SK-N-SH (cell line): ENCODE measurements at regions of chr4 and their contacts with region 1.

Region 1: DNA sequence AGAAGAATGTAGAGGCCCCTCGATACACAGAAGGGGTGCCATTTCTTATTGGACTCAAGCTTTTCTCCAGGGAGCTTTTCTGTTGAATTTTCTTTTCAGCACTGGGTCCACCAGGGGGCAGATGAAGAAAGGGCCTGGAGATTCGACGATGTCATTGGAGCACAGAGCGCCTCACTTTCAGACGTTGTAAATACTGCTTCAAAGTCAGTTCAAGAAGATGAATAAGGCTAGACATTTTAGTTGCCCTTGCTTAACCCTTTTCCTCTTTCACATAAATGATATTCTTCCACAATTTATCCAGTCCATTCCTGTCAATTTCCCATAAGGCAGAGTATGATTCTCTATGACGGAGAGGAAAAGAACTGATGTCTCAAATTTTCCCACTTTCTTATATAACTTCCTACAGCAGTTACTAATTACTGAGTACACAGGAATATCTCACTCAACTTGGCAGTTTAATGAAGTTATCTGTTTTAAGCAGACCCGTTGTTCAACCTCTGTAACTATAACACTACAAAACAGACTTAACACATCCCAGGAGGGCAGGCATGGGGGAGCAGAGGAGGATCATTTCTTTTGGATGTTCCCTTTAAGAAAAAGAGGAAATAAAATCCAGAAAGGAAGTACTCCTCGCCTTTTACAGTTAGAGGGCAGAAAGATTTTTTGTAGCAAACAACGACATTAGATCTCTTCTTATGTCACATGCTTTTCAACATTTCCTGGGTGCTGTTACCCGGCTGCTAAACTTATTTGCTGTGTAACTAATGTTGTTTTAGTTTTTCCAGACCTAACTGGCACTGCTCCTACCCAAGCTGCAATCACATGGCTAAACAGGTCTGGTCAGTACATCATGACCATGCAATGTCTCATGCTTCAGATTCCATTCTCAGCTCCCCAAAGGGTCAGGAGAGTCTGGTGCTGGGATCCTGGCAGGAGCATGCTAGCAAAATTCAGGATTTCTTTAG is 12.2 kb upstream of the CENPU start:
- DNase-seq: peak; percentile 84
- H3K4me3 ChIP-seq: no peak overlapping the region; a peak in 1 of 4 replicates
- H3K27ac ChIP-seq: peak overlapping the region; percentile 32 to 82; a peak in 3 of 4 replicates
- H3K4me1 ChIP-seq: peaks cover 4 to 14% of the 10 kb centered on the region in 2 experiments; a peak in 1 of 4 replicates
- H3K27me3 ChIP-seq: no peaks in the 10 kb centered on the region
- CTCF ChIP-seq: peak; percentile 86
- EP300 ChIP-seq: no peak
- RAD21 ChIP-seq: peak; percentile 96

Region 2: GRCh38 chr4:184695178-184695896 is 50.8 kb before region 1 on chr4:
- CTCF ChIA-PET with region 1: no interaction called
- POLR2A ChIA-PET with region 1: no interaction called
- DNase-seq: no peak
- H3K4me3 ChIP-seq: no peak overlapping the region
- H3K27ac ChIP-seq: peak overlapping the region; percentile 46 to 76; a peak in 3 of 4 replicates
- H3K4me1 ChIP-seq: peaks cover 0 to 5% of the 10 kb centered on the region in 2 experiments; a peak in 1 of 4 replicates
- H3K27me3 ChIP-seq: no peaks in the 10 kb centered on the region
- CTCF ChIP-seq: no peak
- EP300 ChIP-seq: peak in 1 of 2 experiments; percentile 51; a peak in 2 of 4 replicates
- RAD21 ChIP-seq: no peak

Region 3: DNA sequence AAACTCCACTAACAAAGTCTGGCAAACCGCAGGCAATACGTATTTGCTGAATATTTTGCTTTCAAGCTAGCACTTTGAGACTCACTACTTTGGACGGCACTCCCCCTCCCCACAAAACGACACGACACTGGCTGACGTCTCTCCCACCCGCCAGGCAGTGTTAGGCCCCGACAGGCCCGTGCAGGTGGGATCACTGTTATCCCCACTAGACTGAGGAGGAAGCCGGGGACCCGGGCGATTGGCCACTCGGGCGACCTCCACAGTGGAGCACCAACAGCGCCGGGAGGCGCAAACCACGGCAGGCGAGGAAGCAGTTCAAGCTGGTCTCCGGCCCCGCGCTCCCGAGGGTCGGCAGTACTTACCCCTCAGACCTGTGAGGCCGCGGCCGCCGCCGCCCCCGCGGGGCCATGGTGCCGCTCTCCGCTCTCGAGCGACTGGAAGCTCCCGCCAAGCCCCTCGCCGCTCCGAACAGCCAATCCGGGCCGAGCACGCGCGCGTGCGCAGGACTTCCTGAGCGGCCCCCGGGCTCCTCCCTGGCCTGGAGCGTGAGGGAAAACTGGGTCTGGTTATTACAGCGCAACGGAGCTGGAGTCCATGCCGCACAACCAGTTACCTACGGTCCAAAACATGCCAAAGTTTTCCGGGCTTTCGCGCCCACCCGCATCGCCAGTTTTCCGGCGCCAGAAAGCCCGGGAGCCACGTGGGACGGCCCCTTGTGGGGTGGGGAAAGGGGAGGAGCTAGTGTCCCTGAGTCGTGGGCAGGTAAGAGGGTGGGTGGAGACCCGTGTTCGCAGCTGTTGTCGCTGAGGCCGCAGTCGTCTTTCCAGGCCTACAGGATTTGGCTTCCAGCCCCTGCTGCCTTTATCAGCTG is 12.2 kb before region 1 on chr4 and contains the start of gene CENPU:
- CTCF ChIA-PET with region 1: interaction called, 17 read pairs
- POLR2A ChIA-PET with region 1: interaction called, 7 read pairs
- DNase-seq: peak; percentile 99
- H3K4me3 ChIP-seq: peak within 1 kb of the TSS; percentile 95 to 97
- H3K27ac ChIP-seq: peak within 1 kb of the TSS; percentile 53 to 85
- H3K4me1 ChIP-seq: peaks cover 11 to 18% of the 10 kb centered on the region in 2 experiments; a peak in 3 of 4 replicates
- H3K27me3 ChIP-seq: no peaks in the 10 kb centered on the region
- CTCF ChIP-seq: no peak
- EP300 ChIP-seq: peak; percentile 24 to 34; a peak in 2 of 4 replicates
- RAD21 ChIP-seq: no peak; the same call in 1 of the 2 replicates
- polyA plus RNA-seq, gene CENPU: 8.7 and 9.6 TPM in 2 replicates

Region 4: GRCh38 chr4:184819786-184820185 is 73.7 kb after region 1 on chr4:
- CTCF ChIA-PET with region 1: interaction called, 10 read pairs
- POLR2A ChIA-PET with region 1: no interaction called
- DNase-seq: no peak
- H3K4me3 ChIP-seq: no peak overlapping the region
- H3K27ac ChIP-seq: no peak overlapping the region
- H3K4me1 ChIP-seq: peaks cover 9 to 25% of the 10 kb centered on the region in 2 experiments; a peak in 3 of 4 replicates
- H3K27me3 ChIP-seq: no peaks in the 10 kb centered on the region
- CTCF ChIP-seq: no peak
- EP300 ChIP-seq: no peak
- RAD21 ChIP-seq: no peak

Region 5: GRCh38 chr4:184983672-184984356 is 237.7 kb after region 1 on chr4:
- CTCF ChIA-PET with region 1: interaction called, 58 read pairs
- POLR2A ChIA-PET with region 1: interaction called, 6 read pairs
- DNase-seq: peak; percentile 95
- H3K4me3 ChIP-seq: peak overlapping the region in 1 of 2 experiments; percentile 35; a peak in 2 of 4 replicates
- H3K27ac ChIP-seq: peak overlapping the region in 1 of 2 experiments; percentile 67; a peak in 2 of 4 replicates
- H3K4me1 ChIP-seq: peaks cover 0 to 21% of the 10 kb centered on the region in 2 experiments; a peak in 2 of 4 replicates
- H3K27me3 ChIP-seq: no peaks in the 10 kb centered on the region; the same call in 1 of the 2 replicates
- CTCF ChIP-seq: peak; percentile 45
- EP300 ChIP-seq: no peak
- RAD21 ChIP-seq: peak; percentile 92

Region 6: GRCh38 chr4:185011408-185011807 is 265.3 kb after region 1 on chr4:
- CTCF ChIA-PET with region 1: interaction called, 24 read pairs
- POLR2A ChIA-PET with region 1: no interaction called
- DNase-seq: peak; percentile 82
- H3K4me3 ChIP-seq: no peak overlapping the region; a peak in 1 of 4 replicates
- H3K27ac ChIP-seq: no peak overlapping the region
- H3K4me1 ChIP-seq: no peaks in the 10 kb centered on the region; a peak in 1 of 4 replicates
- H3K27me3 ChIP-seq: peaks cover 39% of the 10 kb centered on the region; the same call in 1 of the 2 replicates
- CTCF ChIP-seq: peak; percentile 59
- EP300 ChIP-seq: no peak
- RAD21 ChIP-seq: peak; percentile 60